GM12878 (cell line): ENCODE measurements at regions of chr1 and their contacts with region 1.

Region 1: DNA sequence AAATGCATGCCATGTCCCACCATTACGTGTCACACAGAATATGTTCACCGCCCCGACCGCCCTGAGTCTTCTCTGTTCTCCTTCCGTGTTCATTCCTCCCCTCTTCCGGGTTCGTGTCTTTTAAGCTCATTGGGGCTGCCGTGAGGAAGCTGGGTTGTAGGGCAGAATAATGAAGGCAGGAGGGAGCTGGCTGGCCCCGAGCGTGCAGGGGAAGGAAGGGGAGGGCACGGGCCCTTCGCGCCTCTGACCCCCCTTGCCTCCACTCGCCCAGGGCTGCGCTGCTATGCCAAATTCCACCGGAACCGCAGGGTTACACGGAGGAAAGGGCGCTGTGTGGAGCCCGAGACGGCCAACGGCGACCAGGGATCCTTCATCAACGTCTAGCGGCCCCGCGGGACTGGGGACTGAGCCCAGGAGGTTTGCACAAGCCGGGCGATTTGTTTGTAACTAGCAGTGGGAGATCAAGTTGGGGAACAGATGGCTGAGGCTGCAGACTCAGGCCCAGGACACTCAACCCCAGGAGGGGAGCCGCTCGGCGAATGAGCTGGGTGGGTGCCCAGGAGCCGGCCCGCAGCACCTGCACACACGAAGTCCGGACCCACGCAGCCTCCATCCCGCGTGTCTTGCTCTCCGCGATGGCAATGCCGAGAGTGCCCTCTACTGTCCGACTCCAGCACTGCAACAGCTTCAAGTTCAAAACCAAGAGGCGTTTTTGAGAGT is 16.5 kb upstream of the AGTRAP start:
- DNase-seq: no peak
- ATAC-seq: peak; percentile 91
- H3K4me3 ChIP-seq: peak overlapping the region; percentile 57; the same call in 1 of the 2 replicates
- H3K27ac ChIP-seq: no peak overlapping the region
- H3K4me1 ChIP-seq: peaks cover 5% of the 10 kb centered on the region; the same call in 1 of the 2 replicates
- H3K27me3 ChIP-seq: no peaks in the 10 kb centered on the region
- CTCF ChIP-seq: peak; percentile 91 to 98 (median 97)
- EP300 ChIP-seq: no peak
- POLR2A ChIP-seq: peak; percentile 53; the same call in 1 of the 2 replicates
- RAD21 ChIP-seq: peak; percentile 91

Region 2: GRCh38 chr1:11654137-11654938 is 65.1 kb before region 1 on chr1 and contains the starts of genes FBXO2 and FBXO44:
- CTCF ChIA-PET with region 1: interaction called, 36 read pairs
- POLR2A ChIA-PET with region 1: no interaction called
- RAD21 ChIA-PET with region 1: interaction called, 25 read pairs
- SMC1A ChIA-PET with region 1: interaction called, 6 read pairs
- in situ Hi-C with region 1: loop called (anchors 5 kb)
- intact Hi-C with region 1: loop called (anchors 1 kb)
- DNase-seq: no peak
- ATAC-seq: peak; percentile 83
- H3K4me3 ChIP-seq: peak within 1 kb of the TSS; percentile 80
- H3K27ac ChIP-seq: no peak within 1 kb of the TSS
- H3K4me1 ChIP-seq: peaks cover 5% of the 10 kb centered on the region
- H3K27me3 ChIP-seq: no peaks in the 10 kb centered on the region; a peak in 2 of 4 replicates
- CTCF ChIP-seq: no peak
- EP300 ChIP-seq: no peak
- POLR2A ChIP-seq: peak; percentile 47; the same call in 1 of the 2 replicates
- RAD21 ChIP-seq: no peak
- polyA plus RNA-seq, gene FBXO2: 0.07 TPM in 1 of 2 experiments, not detected in the other
- polyA plus RNA-seq, gene FBXO44: 0.77 to 1.5 TPM

Region 3: GRCh38 chr1:11735854-11736745 is 16.6 kb after region 1 on chr1 and contains the start of gene AGTRAP:
- CTCF ChIA-PET with region 1: interaction called, 17 read pairs
- POLR2A ChIA-PET with region 1: no interaction called
- RAD21 ChIA-PET with region 1: no interaction called
- SMC1A ChIA-PET with region 1: interaction called, 8 read pairs
- in situ Hi-C with region 1: no loop called
- intact Hi-C with region 1: no loop called
- DNase-seq: no peak
- ATAC-seq: peak; percentile 92
- H3K4me3 ChIP-seq: peak within 1 kb of the TSS; percentile 86
- H3K27ac ChIP-seq: peak within 1 kb of the TSS; percentile 35
- H3K4me1 ChIP-seq: peaks cover 10% of the 10 kb centered on the region
- H3K27me3 ChIP-seq: no peaks in the 10 kb centered on the region
- CTCF ChIP-seq: 0 out of 6 replicates have a peak, but pooled peaks of 1 of the 3 experiments have one; percentile 1
- EP300 ChIP-seq: no peak
- POLR2A ChIP-seq: peak; percentile 54; the same call in 1 of the 2 replicates
- RAD21 ChIP-seq: no peak
- polyA plus RNA-seq, gene AGTRAP: 3.0 to 4.1 TPM